ENCODE measurements at regions of chr12 and their contacts with region 1.

Region 1: GRCh38 chr12:76020731-76021672 is 10.6 kb downstream of the PHLDA1 start:
- DNase-seq: peak; percentile 97
- H3K4me3 ChIP-seq: no peak overlapping the region
- H3K27ac ChIP-seq: peak overlapping the region; percentile 99
- H3K4me1 ChIP-seq: peaks cover 64% of the 10 kb centered on the region
- H3K27me3 ChIP-seq: no peaks in the 10 kb centered on the region
- CTCF ChIP-seq: no peak

Region 2: DNA sequence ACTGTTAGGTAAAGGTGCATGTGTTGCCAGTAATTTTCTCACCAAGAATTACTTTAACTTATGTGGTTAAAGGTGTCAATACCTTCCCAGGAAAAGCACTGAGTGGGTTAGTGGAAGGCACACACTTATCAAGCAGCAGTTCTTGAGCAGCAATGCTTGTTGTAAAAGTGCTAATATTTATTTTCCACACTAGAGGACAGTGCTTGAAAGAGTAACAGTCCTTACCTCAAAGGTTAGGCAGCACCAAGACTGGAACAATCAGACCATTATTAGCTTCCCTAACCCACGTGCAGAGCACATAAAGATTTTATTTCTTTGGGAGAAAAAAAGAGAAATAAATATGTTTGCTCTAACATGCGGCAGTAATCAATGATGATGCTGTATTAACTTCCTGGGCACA is 460.8 kb before region 1 on chr12:
- CTCF ChIA-PET with region 1: no interaction called
- dilution Hi-C with region 1: no loop called
- in situ Hi-C with region 1: no loop called
- intact Hi-C with region 1: loop called (anchors 2 kb)
- DNase-seq: peak; percentile 56
- H3K4me3 ChIP-seq: no peak overlapping the region
- H3K27ac ChIP-seq: no peak overlapping the region
- H3K4me1 ChIP-seq: peaks cover 18% of the 10 kb centered on the region
- H3K27me3 ChIP-seq: no peaks in the 10 kb centered on the region
- CTCF ChIP-seq: peak; percentile 48 to 68

Region 3: DNA sequence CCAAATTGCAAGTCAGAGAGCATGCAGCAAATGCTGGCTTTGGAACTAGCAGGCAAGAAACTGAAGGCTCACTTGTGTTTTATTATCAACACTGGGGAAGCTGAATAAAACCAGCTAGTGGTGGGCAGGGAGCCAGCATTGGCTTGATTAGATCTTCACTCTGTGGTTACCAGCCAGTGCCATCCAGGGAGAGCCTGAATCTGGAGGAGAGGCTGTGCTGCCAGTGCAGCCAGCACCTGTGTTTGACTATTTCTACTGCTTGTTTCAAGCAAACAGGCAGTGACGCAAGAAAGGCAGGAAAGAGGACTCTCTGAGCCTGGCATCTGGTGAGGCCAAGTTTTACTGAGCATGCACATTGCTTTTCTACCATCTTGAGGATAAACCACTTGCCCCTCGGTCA is 236.4 kb before region 1 on chr12:
- CTCF ChIA-PET with region 1: no interaction called
- dilution Hi-C with region 1: no loop called
- in situ Hi-C with region 1: no loop called
- intact Hi-C with region 1: loop called (anchors 10 kb)
- DNase-seq: peak; percentile 91
- H3K4me3 ChIP-seq: no peak overlapping the region
- H3K27ac ChIP-seq: peak overlapping the region; percentile 2
- H3K4me1 ChIP-seq: peaks cover 56% of the 10 kb centered on the region
- H3K27me3 ChIP-seq: no peaks in the 10 kb centered on the region
- CTCF ChIP-seq: no peak

Region 4: DNA sequence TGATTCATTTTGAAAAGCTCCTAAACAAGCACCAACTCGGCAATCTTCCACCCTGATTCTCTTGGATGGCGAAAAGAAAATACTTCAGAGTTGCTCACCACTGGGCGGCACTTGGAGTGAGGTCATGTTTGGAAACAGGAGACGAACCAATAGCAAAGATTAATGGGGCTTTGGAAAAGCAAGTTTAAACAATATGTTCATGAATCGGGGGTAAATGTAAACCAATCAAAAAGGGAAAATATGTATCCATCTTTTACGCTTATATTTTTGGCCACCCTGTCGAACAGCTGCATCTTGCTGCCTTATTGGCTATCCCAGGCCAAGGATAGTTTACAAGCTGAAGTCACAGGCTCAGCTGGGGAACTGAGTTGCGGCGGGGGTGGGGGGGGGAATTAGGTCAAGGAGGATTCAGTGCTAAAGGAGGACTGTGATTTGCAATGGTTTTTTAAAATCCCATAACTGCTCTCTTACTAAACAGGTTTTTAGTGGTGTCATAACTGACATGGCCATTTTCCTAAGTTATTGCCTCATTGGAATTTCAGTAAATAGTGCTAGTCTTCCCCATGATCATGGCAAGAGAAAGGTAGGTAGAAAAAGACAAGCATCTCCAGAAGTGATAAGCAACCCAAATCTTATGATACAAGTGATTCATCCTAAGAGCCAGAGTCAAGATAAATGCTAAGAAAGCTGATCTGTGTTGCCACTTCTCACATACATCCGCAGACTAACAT is 200.0 kb before region 1 on chr12:
- CTCF ChIA-PET with region 1: no interaction called
- dilution Hi-C with region 1: no loop called
- in situ Hi-C with region 1: loop called in 1 of 2 experiments (anchors 5 kb)
- intact Hi-C with region 1: loop called (anchors 1 kb)
- DNase-seq: peak; percentile 79
- H3K4me3 ChIP-seq: no peak overlapping the region
- H3K27ac ChIP-seq: peak overlapping the region; percentile 44
- H3K4me1 ChIP-seq: peaks cover 52% of the 10 kb centered on the region
- H3K27me3 ChIP-seq: no peaks in the 10 kb centered on the region
- CTCF ChIP-seq: peak in 1 of 2 donors; percentile 40

Region 5: GRCh38 chr12:75877763-75878621 is 143.0 kb before region 1 on chr12:
- CTCF ChIA-PET with region 1: no interaction called
- dilution Hi-C with region 1: no loop called
- in situ Hi-C with region 1: no loop called
- intact Hi-C with region 1: loop called (anchors 5 kb)
- DNase-seq: peak; percentile 74
- H3K4me3 ChIP-seq: no peak overlapping the region
- H3K27ac ChIP-seq: peak overlapping the region; percentile 93
- H3K4me1 ChIP-seq: peaks cover 28% of the 10 kb centered on the region
- H3K27me3 ChIP-seq: no peaks in the 10 kb centered on the region
- CTCF ChIP-seq: no peak

Region 6: DNA sequence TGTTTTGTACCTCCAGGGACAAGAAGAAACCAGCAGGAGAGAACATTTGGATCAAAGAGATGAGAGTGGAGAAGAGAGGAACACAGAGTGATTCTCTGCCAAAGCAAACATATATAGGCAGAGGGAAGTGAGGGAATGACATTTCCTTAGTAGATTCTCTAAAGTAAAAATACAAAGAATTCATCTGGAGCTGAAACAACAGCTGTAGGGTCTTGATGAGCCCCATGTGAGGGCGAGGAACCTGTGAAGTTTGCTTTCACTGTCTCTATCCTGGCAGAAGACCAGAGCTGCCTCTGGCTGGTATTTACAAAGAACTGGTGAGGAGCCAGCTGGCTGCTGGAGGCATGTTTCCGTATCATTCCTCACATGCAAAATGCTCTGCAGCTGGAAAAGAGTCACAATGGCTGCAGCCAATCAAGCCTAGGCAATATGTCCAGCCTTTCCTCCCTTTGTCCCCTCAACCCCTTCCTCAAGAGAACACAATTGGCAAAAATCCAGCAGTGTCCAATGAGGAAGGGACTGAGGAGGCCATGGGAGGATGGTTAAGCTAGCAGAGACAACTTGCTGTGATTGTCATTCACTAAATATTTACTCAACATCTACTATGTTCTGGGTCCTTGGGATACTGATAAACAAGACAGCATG is 111.9 kb before region 1 on chr12:
- CTCF ChIA-PET with region 1: no interaction called
- dilution Hi-C with region 1: no loop called
- in situ Hi-C with region 1: no loop called
- intact Hi-C with region 1: no loop called
- DNase-seq: no peak
- H3K4me3 ChIP-seq: no peak overlapping the region
- H3K27ac ChIP-seq: no peak overlapping the region
- H3K4me1 ChIP-seq: peaks cover 9% of the 10 kb centered on the region
- H3K27me3 ChIP-seq: no peaks in the 10 kb centered on the region
- CTCF ChIP-seq: no peak

Region 7: GRCh38 chr12:75954041-75954440 is 67.0 kb before region 1 on chr12:
- CTCF ChIA-PET with region 1: no interaction called
- dilution Hi-C with region 1: no loop called
- in situ Hi-C with region 1: loop called in 1 of 2 experiments (anchors 10 kb)
- intact Hi-C with region 1: loop called (anchors 1 kb)
- DNase-seq: peak; percentile 95
- H3K4me3 ChIP-seq: no peak overlapping the region
- H3K27ac ChIP-seq: peak overlapping the region; percentile 94
- H3K4me1 ChIP-seq: peaks cover 22% of the 10 kb centered on the region
- H3K27me3 ChIP-seq: no peaks in the 10 kb centered on the region
- CTCF ChIP-seq: no peak

Region 8: DNA sequence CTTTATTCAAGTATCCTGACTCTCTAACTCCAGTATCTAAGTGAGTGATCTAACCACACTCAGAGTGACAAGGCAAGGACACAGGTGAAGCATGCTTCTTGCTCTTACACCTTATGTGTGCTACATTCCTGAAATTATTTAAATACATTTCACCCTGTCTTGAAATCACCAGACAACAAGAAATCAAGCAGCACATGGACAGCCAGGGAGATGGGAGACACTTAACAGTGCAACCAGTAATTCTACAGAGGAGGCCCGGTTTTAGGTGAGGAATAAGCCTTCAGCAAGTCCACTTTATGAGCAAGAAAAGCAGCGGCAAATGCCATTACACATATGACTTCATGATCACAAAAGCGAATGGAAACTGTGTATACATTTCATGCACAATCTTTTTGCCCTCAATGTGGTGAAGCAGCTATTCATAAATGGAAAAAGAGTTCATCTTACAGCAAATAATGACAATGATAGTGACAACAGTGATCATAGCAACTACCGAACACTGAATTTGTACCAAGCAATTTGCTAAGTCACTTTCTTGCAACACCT is 26.7 kb before region 1 on chr12:
- CTCF ChIA-PET with region 1: no interaction called
- dilution Hi-C with region 1: no loop called
- in situ Hi-C with region 1: no loop called
- intact Hi-C with region 1: loop called (anchors 1 kb)
- DNase-seq: no peak
- H3K4me3 ChIP-seq: no peak overlapping the region
- H3K27ac ChIP-seq: peak overlapping the region; percentile 27
- H3K4me1 ChIP-seq: peaks cover 40% of the 10 kb centered on the region
- H3K27me3 ChIP-seq: no peaks in the 10 kb centered on the region
- CTCF ChIP-seq: no peak

Measured in mammary epithelial cell (primary cell).